ENCODE measurements at regions of chr14 and their contacts with region 1.

Region 1: DNA sequence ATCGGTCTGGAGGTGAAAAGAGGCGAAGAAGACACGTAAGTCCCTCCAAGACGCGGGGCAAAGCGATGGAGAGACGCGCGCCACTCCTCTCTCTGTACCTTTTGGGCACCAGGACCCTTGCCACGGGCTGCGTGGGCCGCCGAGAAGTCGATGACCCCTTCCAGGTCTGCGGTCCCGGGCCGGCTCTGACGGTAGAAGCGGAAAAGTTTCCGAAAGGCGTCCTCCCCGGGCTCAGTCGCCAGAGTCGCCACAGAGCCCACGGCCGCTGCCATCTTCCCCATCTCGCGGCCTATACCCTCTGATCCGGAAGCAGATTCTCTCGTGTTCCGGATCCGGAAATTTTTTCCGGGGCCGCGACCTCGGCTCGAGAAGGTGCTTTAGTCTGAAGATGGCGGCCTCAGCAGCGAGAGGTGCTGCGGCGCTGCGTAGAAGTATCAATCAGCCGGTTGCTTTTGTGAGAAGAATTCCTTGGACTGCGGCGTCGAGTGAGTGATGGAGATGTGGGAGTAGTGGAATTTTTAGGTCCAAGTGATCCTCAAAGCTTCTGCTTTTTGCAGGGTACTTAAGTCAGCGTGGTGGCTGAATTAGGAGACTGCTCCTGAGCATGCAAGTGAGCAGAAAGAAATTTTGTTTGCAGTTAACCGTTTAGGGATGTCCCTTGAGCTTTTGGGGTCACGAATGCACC is at the starts of genes ALKBH1 and SLIRP:
- DNase-seq: peak; percentile 90 to 91
- H3K4me3 ChIP-seq: peak within 1 kb of the TSS; percentile 61 to 71
- H3K27ac ChIP-seq: peak within 1 kb of the TSS; percentile 55 to 73
- H3K4me1 ChIP-seq: peaks cover 0 to 34% (median 26%) of the 10 kb centered on the region in 4 donors
- H3K27me3 ChIP-seq: no peaks in the 10 kb centered on the region
- CTCF ChIP-seq: no peak

Region 2: DNA sequence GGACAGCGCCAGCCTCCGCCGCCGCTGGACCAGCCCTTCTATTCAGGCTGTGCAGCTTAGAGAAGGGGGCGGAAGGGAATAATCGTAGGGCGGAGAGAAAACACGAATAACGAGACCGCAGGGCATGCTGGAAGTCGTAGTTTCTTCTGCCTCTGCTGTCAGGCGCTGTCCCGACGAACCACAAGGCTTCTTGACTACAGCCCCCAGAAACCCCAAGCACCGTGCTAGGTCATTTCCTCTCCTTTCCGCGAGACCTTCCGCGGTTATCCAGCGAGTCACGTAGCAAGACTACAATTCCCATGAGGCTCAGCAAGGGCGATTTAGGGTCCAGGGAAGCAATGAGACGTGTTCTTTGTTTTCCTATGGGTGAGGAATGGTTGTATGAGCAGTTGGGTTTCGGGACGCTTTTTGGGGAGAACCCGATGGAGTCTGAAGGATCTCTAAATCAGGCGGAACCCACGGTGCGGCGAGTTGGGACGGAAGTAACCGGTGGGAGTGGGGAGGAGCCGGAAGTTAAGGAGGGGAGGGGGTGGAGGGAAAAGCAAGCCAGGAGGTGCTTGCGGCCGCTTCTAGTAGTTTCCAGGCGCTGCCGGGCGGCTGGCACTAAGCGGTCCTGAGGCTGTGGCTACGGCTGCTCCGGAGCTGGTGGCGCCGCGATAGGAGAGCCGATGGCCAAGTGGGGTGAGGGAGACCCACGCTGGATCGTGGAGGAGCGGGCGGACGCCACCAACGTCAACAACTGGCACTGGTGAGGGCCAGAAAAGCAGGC is 250.2 kb before region 1 on chr14 and contains the starts of genes AHSA1 and VIPAS39:
- intact Hi-C with region 1: loop called (anchors 5 kb)
- DNase-seq: peak; percentile 97 to 98
- H3K4me3 ChIP-seq: peak within 1 kb of the TSS; percentile 89
- H3K27ac ChIP-seq: peak within 1 kb of the TSS; percentile 92 to 94
- H3K4me1 ChIP-seq: peaks cover 0 to 31% (median 21%) of the 10 kb centered on the region in 4 donors
- H3K27me3 ChIP-seq: no peaks in the 10 kb centered on the region
- CTCF ChIP-seq: no peak

Region 3: DNA sequence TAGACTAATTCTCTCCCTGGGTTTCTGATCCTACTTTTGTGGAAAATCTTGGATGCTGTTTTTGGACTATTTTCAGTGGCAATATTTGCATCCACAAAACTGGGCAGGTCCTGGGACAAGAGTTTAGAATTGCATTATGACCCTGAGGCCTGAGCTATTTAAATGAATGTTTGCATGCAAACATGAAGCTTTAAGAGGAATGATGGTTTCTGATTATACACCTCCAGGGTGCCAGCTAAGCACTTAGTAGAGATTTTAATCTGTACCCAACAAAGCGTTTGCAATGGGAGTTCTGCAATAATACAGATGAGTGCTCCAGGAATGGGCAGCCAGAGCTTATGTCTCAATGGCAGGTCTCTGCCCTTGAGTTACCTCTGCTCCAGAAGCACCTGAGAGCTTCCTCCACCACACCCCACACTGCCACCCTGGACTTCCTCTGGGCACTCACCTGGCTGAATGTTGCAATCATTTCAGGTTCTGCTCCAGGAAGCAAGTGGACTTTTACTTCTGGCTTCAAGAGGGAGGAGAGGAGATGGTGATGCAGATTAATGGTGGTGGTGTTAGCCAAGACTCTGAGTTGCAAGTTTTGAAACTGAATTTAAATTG is 85.4 kb before region 1 on chr14:
- intact Hi-C with region 1: loop called (anchors 2 kb)
- DNase-seq: no peak
- H3K4me3 ChIP-seq: no peak overlapping the region
- H3K27ac ChIP-seq: no peak overlapping the region
- H3K4me1 ChIP-seq: no peaks in the 10 kb centered on the region
- H3K27me3 ChIP-seq: no peaks in the 10 kb centered on the region
- CTCF ChIP-seq: no peak

Region 4: GRCh38 chr14:77752799-77753521 is 45.1 kb after region 1 on chr14:
- intact Hi-C with region 1: loop called (anchors 5 kb)
- DNase-seq: no peak
- H3K4me3 ChIP-seq: no peak overlapping the region
- H3K27ac ChIP-seq: no peak overlapping the region
- H3K4me1 ChIP-seq: peaks cover 0 to 14% (median 6%) of the 10 kb centered on the region in 4 donors
- H3K27me3 ChIP-seq: no peaks in the 10 kb centered on the region
- CTCF ChIP-seq: no peak